ENCODE measurements at regions of chr3 and their contacts with region 1.

Region 1: GRCh38 chr3:23304424-23304823 is 101.3 kb downstream of the UBE2E2 start:
- DNase-seq: no peak
- ATAC-seq: no peak
- H3K4me3 ChIP-seq: no peak overlapping the region
- H3K27ac ChIP-seq: peak overlapping the region; percentile 49 to 83 (median 62)
- H3K4me1 ChIP-seq: peaks cover 41 to 52% of the 10 kb centered on the region in 2 donors
- H3K27me3 ChIP-seq: no peaks in the 10 kb centered on the region
- CTCF ChIP-seq: no peak
- POLR2A ChIP-seq: no peak

Region 2: DNA sequence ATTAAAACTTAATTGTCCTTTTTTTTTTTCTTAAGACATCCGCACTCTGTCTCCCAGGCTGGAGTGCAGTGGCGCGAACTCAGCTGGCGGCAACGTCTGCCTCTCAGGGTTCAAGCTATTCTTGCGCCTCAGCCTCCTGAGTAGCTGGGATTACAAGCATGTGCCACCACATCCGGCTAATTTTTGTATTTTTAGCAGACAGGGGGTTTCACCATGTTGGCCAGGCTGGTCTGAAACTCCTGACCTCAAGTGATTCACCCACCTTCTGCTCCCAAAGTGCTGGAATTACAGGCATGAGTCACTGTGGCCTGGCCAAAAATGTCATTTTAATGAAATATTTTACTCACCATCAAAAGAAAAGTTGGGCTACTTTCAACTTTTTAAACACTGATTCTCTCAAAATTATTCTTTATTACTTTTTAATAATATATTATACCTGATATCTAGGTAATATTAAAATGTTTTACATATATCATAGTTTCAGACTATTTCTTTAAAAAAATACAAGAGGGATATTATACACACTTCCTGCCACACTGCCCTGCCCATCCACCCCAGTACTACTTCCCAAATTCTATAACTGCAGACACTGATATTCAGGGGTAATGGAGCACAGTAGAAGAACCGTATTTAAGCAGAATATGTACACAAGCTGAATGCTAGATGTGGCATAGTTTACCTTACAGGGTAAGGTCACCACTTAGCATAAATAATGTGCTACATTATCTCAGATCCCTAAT is 829.5 kb before region 1 on chr3:
- in situ Hi-C with region 1: no loop called
- intact Hi-C with region 1: no loop called
- DNase-seq: no peak
- ATAC-seq: no peak
- H3K4me3 ChIP-seq: no peak overlapping the region
- H3K27ac ChIP-seq: no peak overlapping the region
- H3K4me1 ChIP-seq: no peaks in the 10 kb centered on the region
- H3K27me3 ChIP-seq: no peaks in the 10 kb centered on the region
- CTCF ChIP-seq: no peak
- POLR2A ChIP-seq: no peak

Region 3: GRCh38 chr3:23079932-23080373 is 224.5 kb before region 1 on chr3:
- in situ Hi-C with region 1: no loop called
- intact Hi-C with region 1: no loop called
- DNase-seq: no peak
- ATAC-seq: peak in 1 of 2 donors; percentile 44
- H3K4me3 ChIP-seq: peak overlapping the region; percentile 23 to 48 (median 34)
- H3K27ac ChIP-seq: no peak overlapping the region
- H3K4me1 ChIP-seq: peaks cover 16 to 22% of the 10 kb centered on the region in 2 donors
- H3K27me3 ChIP-seq: no peaks in the 10 kb centered on the region
- CTCF ChIP-seq: no peak
- POLR2A ChIP-seq: no peak

Region 4: GRCh38 chr3:23202921-23203707 is 101.3 kb before region 1 on chr3 and contains the start of gene UBE2E2:
- in situ Hi-C with region 1: no loop called
- intact Hi-C with region 1: loop called (anchors 2 kb)
- DNase-seq: peak; percentile 72 to 78
- ATAC-seq: peak; percentile 75
- H3K4me3 ChIP-seq: peak within 1 kb of the TSS; percentile 67 to 84 (median 78)
- H3K27ac ChIP-seq: peak within 1 kb of the TSS; percentile 90 to 95 (median 92)
- H3K4me1 ChIP-seq: peaks cover 37 to 48% of the 10 kb centered on the region in 2 donors
- H3K27me3 ChIP-seq: no peaks in the 10 kb centered on the region
- CTCF ChIP-seq: no peak
- POLR2A ChIP-seq: peak; percentile 95 to 97
- total RNA-seq, gene UBE2E2: 7.9 to 44.7 (median 26.6) TPM

Region 5: DNA sequence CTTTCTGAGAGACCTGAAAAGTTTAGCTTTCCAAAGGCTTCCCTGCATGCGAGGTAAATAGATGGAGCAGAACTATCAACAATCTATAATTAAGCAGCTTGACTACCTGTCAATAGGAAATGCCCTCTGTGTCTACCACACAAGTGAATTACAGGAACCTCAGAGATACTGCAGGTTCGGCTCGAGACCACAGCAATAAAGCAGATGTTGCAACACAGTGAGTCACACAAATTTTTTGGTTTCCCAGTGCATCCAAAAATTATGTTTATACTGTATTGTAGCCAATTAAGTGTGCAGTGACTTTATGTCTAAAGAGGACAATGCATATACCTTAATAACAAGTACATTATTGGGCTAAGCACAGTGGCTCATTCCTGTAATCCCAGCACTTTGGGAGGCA is 150.7 kb after region 1 on chr3:
- in situ Hi-C with region 1: no loop called
- intact Hi-C with region 1: no loop called
- DNase-seq: no peak
- ATAC-seq: peak in 1 of 2 donors; percentile 11
- H3K4me3 ChIP-seq: no peak overlapping the region
- H3K27ac ChIP-seq: no peak overlapping the region
- H3K4me1 ChIP-seq: peaks cover 31 to 34% of the 10 kb centered on the region in 2 donors
- H3K27me3 ChIP-seq: no peaks in the 10 kb centered on the region
- CTCF ChIP-seq: no peak
- POLR2A ChIP-seq: no peak

Region 6: GRCh38 chr3:23691357-23691895 is 387.0 kb after region 1 on chr3:
- in situ Hi-C with region 1: no loop called
- intact Hi-C with region 1: no loop called
- DNase-seq: no peak
- ATAC-seq: no peak
- H3K4me3 ChIP-seq: no peak overlapping the region
- H3K27ac ChIP-seq: no peak overlapping the region
- H3K4me1 ChIP-seq: peaks cover 0 to 4% of the 10 kb centered on the region in 2 donors
- H3K27me3 ChIP-seq: no peaks in the 10 kb centered on the region
- CTCF ChIP-seq: no peak
- POLR2A ChIP-seq: no peak